ENCODE measurements at regions of chr11 and their contacts with region 1.

Region 1: DNA sequence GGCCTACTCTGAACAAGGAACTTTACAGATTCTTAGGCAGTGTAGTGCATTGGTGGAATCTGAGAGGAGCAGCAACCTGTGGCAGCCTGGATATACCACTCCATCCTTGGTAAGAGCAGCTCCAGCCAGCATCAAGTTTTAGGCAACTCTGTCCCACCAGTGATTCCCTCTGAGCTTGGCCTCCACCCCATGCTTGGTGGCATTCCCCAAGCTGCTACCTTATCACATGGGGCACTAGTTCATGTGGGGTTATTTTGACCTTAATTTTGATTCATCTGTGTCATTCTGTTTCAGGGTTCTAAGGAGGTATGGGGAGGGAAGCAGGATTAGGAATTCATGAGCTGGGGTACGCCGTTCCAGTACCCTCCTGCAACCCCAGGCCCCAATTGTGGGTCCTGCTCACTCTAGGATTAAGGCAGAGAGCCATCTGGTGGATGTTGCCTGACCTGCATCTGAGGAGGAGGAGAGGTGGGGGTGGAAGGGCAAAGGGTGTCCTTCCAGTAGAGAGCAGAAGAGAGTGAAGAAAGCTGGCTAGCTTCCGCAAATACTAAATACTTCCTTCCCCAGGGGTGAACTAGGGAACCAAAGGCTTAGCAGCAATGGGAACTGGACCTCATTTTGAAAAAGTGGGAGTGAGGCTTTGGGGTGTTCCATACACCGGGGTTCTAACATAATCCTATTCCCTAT is 10.5 kb downstream of the LRRC51 start:
- DNase-seq: peak; percentile 93

Region 2: DNA sequence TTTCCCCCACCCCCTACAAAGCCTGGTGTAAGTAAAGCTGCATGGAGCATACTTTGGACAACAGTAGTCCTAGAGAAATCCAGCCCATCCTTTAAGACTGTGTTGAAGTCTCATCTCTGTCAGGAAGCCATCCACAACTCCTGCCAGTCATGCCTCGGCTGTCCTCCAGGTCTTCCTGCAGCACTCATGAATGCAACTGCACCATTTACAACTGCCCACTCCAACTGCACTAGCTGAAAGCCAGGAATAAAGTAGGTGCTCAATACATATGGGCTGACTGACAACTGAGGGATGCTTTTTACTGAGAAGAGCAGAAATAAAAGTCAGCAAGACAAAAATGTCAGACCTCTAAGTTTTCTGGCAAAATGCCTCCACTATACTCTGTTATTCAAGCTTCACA is 65.1 kb before region 1 on chr11:
- in situ Hi-C with region 1: loop called (anchors 10 kb)
- DNase-seq: no peak

Measured in KBM-7 (cell line).